Motor neuron (in vitro differentiated cells): ENCODE measurements at regions of chr1 and their contacts with region 1.

Region 1: GRCh38 chr1:167059045-167059808 is 30.9 kb downstream of the GPA33 start:
- ATAC-seq: peak; percentile 44 to 80 (median 60)
- H3K4me3 ChIP-seq: no peak overlapping the region
- H3K27ac ChIP-seq: no peak overlapping the region
- H3K4me1 ChIP-seq: peaks cover 4 to 8% of the 10 kb centered on the region in 2 donors

Region 2: GRCh38 chr1:166910396-166910994 is 148.7 kb before region 1 on chr1:
- in situ Hi-C with region 1: loop called in 8 of 9 experiments (anchors 10 to 25 kb)
- ATAC-seq: peak; percentile 69 to 100 (median 96)
- H3K4me3 ChIP-seq: no peak overlapping the region
- H3K27ac ChIP-seq: no peak overlapping the region
- H3K4me1 ChIP-seq: no peaks in the 10 kb centered on the region

Region 3: DNA sequence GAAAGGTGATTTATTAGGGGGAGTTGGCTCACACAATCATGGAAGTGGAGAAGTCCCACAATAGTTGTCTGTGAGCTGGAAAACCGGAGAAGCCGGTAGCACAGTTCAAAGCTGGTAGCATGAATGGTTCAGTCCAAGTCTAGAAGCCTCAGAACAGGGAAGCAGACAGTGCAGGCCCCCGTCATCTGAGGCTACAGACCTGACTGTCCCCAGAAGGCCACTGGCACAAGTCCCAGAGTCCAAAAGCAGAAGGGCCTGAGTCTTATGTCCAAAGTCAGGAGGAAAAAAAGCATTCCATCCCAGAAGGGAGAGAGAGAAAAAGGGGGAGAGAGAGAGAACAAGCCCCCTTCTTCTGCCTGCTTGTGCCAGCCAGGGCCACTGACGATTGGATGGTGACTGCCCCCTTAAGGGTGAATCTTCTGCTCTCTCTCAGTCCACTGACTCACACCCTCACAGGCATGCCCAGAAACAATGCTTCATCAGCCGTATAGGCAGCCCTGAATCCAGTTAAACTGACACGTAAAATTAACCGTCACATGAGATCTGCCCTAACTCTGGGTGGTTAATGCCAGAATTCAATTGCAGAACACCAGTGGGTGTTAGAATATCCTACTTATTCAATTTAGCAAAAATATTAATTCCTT is 112.2 kb after region 1 on chr1:
- in situ Hi-C with region 1: no loop called
- ATAC-seq: peak in 7 of 8 experiments; percentile 45 to 90 (median 75)
- H3K4me3 ChIP-seq: no peak overlapping the region
- H3K27ac ChIP-seq: no peak overlapping the region
- H3K4me1 ChIP-seq: peaks cover 12 to 13% of the 10 kb centered on the region in 2 donors